ENCODE measurements at regions of chr12 and their contacts with region 1.

Region 1: DNA sequence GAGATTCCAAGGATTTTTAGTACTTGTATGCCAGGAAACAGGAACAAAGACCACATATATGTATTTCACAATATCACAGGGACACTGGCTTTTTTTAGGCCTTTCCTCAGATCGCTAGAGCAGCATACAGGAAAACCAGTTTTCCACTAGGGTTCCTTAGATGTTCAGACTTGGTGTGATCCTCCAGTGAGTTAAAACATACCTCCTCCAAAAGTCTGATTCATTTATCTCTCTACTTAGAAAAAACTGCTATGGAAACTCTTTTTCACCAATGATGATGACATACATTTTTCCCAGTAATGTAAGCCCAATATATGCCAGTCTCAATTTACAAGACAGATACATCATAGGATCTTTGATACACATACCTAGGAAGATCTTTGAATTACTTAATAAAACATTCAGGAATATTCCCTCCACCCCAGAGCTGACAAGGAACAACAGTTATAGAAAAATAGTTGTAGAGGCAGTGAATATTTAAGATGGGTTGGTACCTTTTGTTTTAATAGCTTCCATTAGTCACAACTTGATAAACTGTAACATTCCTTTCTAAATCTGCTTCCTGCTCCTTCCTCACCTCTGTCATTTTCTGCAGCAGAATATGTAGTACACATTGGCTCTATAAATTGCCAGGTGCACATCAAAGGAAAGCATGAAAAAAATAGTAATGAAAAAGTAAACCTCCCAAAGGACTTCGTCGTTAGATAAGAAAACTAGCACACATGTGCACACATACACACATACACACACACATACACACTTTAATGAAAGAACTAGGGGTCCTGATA is 27.5 kb downstream of the BCAT1 start:
- DNase-seq: no peak
- H3K4me3 Mint-ChIP-seq: no peak overlapping the region
- H3K27ac Mint-ChIP-seq: peak overlapping the region; percentile 42
- H3K4me1 Mint-ChIP-seq: peaks cover 44% of the 10 kb centered on the region
- H3K27me3 Mint-ChIP-seq: peaks cover 2% of the 10 kb centered on the region

Region 2: DNA sequence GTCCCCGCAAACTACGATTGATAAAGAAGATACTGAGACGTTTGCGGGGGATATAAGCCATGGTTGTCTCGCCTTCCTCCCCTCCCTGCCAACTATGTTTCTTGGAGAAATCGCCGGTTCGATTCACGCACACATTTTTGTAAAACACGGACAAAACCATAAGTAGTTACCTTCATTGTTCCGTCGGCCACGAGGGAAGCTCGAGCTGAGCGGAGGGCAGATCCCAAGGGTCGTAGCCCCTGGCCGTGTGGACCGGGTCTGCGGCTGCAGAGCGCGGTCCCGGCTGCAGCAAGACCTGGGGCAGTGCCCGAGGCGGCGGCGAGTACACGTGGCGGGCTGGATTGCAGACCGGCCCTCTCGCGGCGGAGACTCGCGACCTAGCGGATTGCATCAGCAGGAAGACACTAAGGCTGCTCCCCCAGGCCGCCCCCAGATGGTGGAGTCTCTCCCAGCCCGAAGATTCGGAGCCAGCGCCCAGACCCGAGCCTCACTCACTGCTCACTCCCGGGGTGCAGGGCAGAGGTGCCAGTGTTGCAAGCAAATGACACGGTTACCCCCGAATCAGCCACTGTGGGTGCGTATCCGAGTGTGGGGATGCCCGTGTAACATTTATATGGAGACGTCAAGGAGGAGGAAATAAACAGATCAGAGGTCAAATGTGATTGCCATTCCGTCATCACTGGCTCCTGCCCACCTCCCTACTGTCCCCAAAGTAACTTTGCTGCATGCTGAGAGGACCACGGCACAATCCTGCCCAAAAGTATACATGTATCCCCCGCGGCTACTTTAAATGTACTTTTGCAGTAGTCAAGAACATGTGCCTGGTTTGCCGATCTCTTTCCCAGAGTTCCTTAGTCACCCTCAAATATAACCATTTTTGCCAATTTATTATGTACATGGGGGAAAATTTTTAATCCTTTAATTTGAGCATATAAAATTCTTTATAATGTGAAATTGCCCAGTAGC is 27.6 kb after region 1 on chr12 and contains the start of gene BCAT1:
- intact Hi-C with region 1: loop called (anchors 1 kb)
- DNase-seq: peak; percentile 33
- H3K4me3 Mint-ChIP-seq: peak within 1 kb of the TSS; percentile 92
- H3K27ac Mint-ChIP-seq: peak within 1 kb of the TSS; percentile 96
- H3K4me1 Mint-ChIP-seq: peaks cover 55% of the 10 kb centered on the region
- H3K27me3 Mint-ChIP-seq: peaks cover 3% of the 10 kb centered on the region
- total RNA-seq, gene BCAT1: 37.3 and 42.0 TPM in 2 replicates

Region 3: GRCh38 chr12:24960222-24960855 is 38.9 kb after region 1 on chr12:
- intact Hi-C with region 1: loop called (anchors 1 kb)
- DNase-seq: peak; percentile 19
- H3K4me3 Mint-ChIP-seq: no peak overlapping the region
- H3K27ac Mint-ChIP-seq: no peak overlapping the region
- H3K4me1 Mint-ChIP-seq: peaks cover 20% of the 10 kb centered on the region
- H3K27me3 Mint-ChIP-seq: no peaks in the 10 kb centered on the region